Calu3 (cell line): ENCODE measurements at regions of chr1 and their contacts with region 1.

Region 1: GRCh38 chr1:159071970-159072582 is 4.5 kb downstream of the AIM2 start:
- DNase-seq: peak; percentile 12
- H3K4me3 Mint-ChIP-seq: no peak overlapping the region
- H3K27ac Mint-ChIP-seq: no peak overlapping the region
- H3K4me1 Mint-ChIP-seq: no peaks in the 10 kb centered on the region
- H3K27me3 Mint-ChIP-seq: peaks cover 7% of the 10 kb centered on the region
- CTCF ChIP-seq: peak; percentile 72

Region 2: DNA sequence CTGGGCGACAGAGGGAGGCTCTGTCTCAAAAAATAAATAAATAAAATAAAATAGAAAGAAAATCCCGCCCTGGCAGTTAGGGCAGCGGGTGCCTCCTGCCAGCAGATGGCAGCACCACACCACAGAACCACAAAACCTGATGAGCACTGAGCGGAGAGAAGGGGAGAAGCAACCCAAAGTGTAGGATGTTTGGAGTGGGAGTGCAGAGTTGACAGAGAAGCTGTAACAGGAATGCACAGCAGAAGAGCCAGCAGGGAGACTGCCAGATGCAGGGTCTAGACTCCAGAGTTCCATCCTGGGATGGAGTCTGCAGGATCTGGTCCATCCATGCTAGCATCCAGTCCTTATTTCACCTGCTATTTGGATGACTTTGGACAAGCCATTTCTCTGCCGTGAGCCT is 1108.4 kb before region 1 on chr1:
- CTCF ChIA-PET with region 1: no interaction called
- intact Hi-C with region 1: loop called (anchors 10 kb)
- DNase-seq: peak; percentile 85
- H3K4me3 Mint-ChIP-seq: no peak overlapping the region
- H3K27ac Mint-ChIP-seq: peak overlapping the region; percentile 51
- H3K4me1 Mint-ChIP-seq: peaks cover 57% of the 10 kb centered on the region
- H3K27me3 Mint-ChIP-seq: no peaks in the 10 kb centered on the region
- CTCF ChIP-seq: peak; percentile 97

Region 3: GRCh38 chr1:158248118-158248517 is 824.0 kb before region 1 on chr1:
- CTCF ChIA-PET with region 1: no interaction called
- intact Hi-C with region 1: loop called (anchors 1 kb)
- DNase-seq: no peak
- H3K4me3 Mint-ChIP-seq: no peak overlapping the region
- H3K27ac Mint-ChIP-seq: no peak overlapping the region
- H3K4me1 Mint-ChIP-seq: no peaks in the 10 kb centered on the region
- H3K27me3 Mint-ChIP-seq: peaks cover 42% of the 10 kb centered on the region
- CTCF ChIP-seq: no peak

Region 4: GRCh38 chr1:158506369-158506987 is 565.6 kb before region 1 on chr1:
- CTCF ChIA-PET with region 1: no interaction called
- intact Hi-C with region 1: loop called (anchors 2 kb)
- DNase-seq: peak; percentile 66
- H3K4me3 Mint-ChIP-seq: no peak overlapping the region
- H3K27ac Mint-ChIP-seq: no peak overlapping the region
- H3K4me1 Mint-ChIP-seq: no peaks in the 10 kb centered on the region
- H3K27me3 Mint-ChIP-seq: peaks cover 29% of the 10 kb centered on the region
- CTCF ChIP-seq: peak; percentile 50

Region 5: GRCh38 chr1:158716335-158716734 is 355.7 kb before region 1 on chr1:
- CTCF ChIA-PET with region 1: no interaction called
- intact Hi-C with region 1: loop called (anchors 10 kb)
- DNase-seq: no peak
- H3K4me3 Mint-ChIP-seq: no peak overlapping the region
- H3K27ac Mint-ChIP-seq: no peak overlapping the region
- H3K4me1 Mint-ChIP-seq: no peaks in the 10 kb centered on the region
- H3K27me3 Mint-ChIP-seq: no peaks in the 10 kb centered on the region
- CTCF ChIP-seq: no peak

Region 6: DNA sequence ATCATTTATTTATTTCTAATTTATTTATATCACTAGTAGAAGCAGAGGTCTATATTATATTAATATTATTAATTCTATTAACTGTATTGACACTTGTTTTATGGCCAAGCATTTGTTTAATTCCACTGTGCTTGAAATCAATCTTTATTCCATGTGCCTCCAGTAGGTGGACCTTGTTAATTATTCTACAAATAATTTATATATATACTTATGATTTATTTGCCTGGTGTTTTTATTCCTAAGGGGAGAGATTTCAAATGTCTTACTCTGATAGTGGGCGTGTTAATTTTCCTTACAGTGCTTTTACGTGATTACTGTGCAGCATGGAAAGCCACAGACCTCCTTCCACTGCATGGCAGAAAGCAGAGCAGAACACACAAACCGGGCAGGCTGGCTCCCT is 273.5 kb before region 1 on chr1:
- CTCF ChIA-PET with region 1: no interaction called
- intact Hi-C with region 1: loop called (anchors 5 kb)
- DNase-seq: no peak
- H3K4me3 Mint-ChIP-seq: no peak overlapping the region
- H3K27ac Mint-ChIP-seq: no peak overlapping the region
- H3K4me1 Mint-ChIP-seq: no peaks in the 10 kb centered on the region
- H3K27me3 Mint-ChIP-seq: peaks cover 73% of the 10 kb centered on the region
- CTCF ChIP-seq: peak; percentile 44

Region 7: GRCh38 chr1:158998781-158999161 is 73.3 kb before region 1 on chr1:
- CTCF ChIA-PET with region 1: no interaction called
- intact Hi-C with region 1: loop called (anchors 1 kb)
- DNase-seq: peak; percentile 51
- H3K4me3 Mint-ChIP-seq: peak overlapping the region; percentile 63
- H3K27ac Mint-ChIP-seq: peak overlapping the region; percentile 38
- H3K4me1 Mint-ChIP-seq: peaks cover 29% of the 10 kb centered on the region
- H3K27me3 Mint-ChIP-seq: no peaks in the 10 kb centered on the region
- CTCF ChIP-seq: peak; percentile 83

Region 8: GRCh38 chr1:159188375-159188788 is 116.3 kb after region 1 on chr1:
- CTCF ChIA-PET with region 1: no interaction called
- intact Hi-C with region 1: no loop called
- DNase-seq: peak; percentile 20
- H3K4me3 Mint-ChIP-seq: peak overlapping the region; percentile 13
- H3K27ac Mint-ChIP-seq: no peak overlapping the region
- H3K4me1 Mint-ChIP-seq: no peaks in the 10 kb centered on the region
- H3K27me3 Mint-ChIP-seq: peaks cover 93% of the 10 kb centered on the region
- CTCF ChIP-seq: no peak